ENCODE measurements at regions of chr4 and their contacts with region 1.

Region 1: GRCh38 chr4:127870688-127871087 is 10.0 kb upstream of the PLK4 start:
- DNase-seq: peak; percentile 76
- H3K4me3 ChIP-seq: no peak overlapping the region
- H3K27me3 ChIP-seq: no peaks in the 10 kb centered on the region
- CTCF ChIP-seq: no peak

Region 2: DNA sequence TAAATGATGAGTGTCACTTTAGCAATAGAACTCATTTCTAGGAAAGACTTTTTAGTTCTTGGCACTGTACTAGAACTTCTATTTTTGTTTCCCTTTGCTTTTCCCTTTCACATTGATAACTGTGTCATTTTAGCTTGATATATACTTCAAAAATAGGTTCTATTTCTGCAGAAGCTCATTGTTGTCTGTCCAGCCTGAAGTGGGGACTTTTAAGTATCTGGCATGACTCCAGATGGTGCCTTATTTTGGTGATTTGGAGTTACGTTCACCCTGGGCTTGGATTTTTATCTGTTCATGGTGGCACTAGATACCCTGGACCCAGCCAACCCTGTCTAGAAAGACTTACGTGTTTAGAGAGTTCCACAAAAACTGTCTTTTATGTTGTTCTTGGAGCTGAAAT is 97.9 kb after region 1 on chr4:
- CTCF ChIA-PET with region 1: interaction called, 3 read pairs
- POLR2A ChIA-PET with region 1: interaction called, 10 read pairs
- DNase-seq: no peak
- H3K4me3 ChIP-seq: no peak overlapping the region
- H3K27me3 ChIP-seq: no peaks in the 10 kb centered on the region
- CTCF ChIP-seq: no peak